ENCODE measurements at regions of chr6 and their contacts with region 1.

Region 1: GRCh38 chr6:71190809-71191208 is 97.8 kb upstream of the OGFRL1 start:
- DNase-seq: no peak
- H3K4me3 Mint-ChIP-seq: no peak overlapping the region
- H3K27ac Mint-ChIP-seq: no peak overlapping the region
- H3K4me1 Mint-ChIP-seq: no peaks in the 10 kb centered on the region
- H3K27me3 Mint-ChIP-seq: peaks cover 6% of the 10 kb centered on the region

Region 2: DNA sequence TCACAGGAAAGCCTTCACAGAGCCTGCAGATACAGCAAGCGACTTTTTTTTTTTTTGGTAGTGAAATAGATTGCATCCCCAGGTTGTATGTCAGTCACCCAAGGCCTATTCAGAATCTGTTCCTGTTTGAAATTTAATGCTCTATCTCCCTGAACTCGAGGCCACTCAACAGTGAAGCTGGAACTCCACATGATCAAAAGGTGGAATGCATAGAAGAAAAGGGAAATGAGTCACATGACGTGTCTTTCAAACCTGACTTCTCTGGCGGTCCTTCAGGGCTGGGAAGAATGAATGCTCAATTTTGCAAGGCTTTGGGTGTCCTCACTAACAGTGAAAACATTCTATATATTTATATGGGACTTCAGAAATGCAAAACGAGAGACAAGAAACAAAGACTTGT is 145.5 kb before region 1 on chr6:
- intact Hi-C with region 1: no loop called
- DNase-seq: no peak
- H3K4me3 Mint-ChIP-seq: no peak overlapping the region
- H3K27ac Mint-ChIP-seq: no peak overlapping the region
- H3K4me1 Mint-ChIP-seq: no peaks in the 10 kb centered on the region
- H3K27me3 Mint-ChIP-seq: no peaks in the 10 kb centered on the region

Region 3: DNA sequence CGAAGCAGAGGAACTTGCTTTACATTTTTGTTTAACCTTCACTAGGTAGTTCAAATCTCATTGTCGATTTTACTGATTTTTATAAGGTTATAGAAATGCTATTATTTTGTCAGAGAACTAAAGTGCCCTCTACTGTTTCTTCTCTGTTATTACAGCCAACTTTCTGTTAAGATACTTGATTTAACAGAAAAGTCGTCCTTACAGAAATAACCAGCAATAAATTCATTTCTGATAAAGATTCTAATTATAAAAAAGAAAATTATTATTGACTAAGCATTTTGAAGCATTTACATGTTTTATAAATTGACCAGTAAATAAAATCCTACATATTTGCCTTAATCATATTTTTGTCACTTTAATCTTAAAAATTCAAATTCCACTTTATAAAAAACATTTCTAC is 158.6 kb after region 1 on chr6:
- intact Hi-C with region 1: loop called (anchors 1 kb)
- DNase-seq: no peak
- H3K4me3 Mint-ChIP-seq: no peak overlapping the region
- H3K27ac Mint-ChIP-seq: no peak overlapping the region
- H3K4me1 Mint-ChIP-seq: no peaks in the 10 kb centered on the region
- H3K27me3 Mint-ChIP-seq: peaks cover 7% of the 10 kb centered on the region